Ovary (tissue), 10 donors: ENCODE measurements at regions of chr21 and their contacts with region 1.

Region 1: GRCh38 chr21:36966066-36966820 is at the start of gene HLCS:
- DNase-seq: peak; percentile 58 to 72 (median 68)
- H3K4me3 ChIP-seq: peak within 1 kb of the TSS; percentile 71
- H3K27ac ChIP-seq: peak within 1 kb of the TSS; percentile 76 to 85
- H3K4me1 ChIP-seq: peaks cover 5% of the 10 kb centered on the region
- H3K27me3 ChIP-seq: no peaks in the 10 kb centered on the region
- CTCF ChIP-seq: peak in 1 of 3 donors; percentile 22
- EP300 ChIP-seq: no peak
- POLR2A ChIP-seq: no peak
- total RNA-seq, gene HLCS: 8.8 to 20.3 (median 12.6) TPM

Region 2: DNA sequence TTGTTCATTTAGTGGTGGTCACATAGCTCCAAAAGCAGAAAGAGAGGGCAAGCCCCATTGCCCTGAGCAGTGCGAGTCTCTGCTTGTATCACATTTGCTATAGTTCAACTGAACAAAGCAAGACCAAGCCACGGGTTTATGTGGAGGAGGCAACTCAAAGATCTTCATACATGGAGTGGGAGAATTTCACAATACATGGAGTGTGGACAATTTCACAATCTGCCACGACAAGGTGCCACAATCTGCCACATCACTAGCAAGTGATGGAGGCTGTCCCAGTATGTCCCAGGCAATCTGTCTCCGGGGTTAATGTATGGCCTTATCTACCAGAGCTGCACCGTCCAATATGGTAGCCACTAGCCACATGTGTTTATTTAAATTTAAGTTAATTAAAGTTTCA is 355.8 kb after region 1 on chr21:
- intact Hi-C with region 1: loop called in 1 of 4 experiments (anchors 10 kb)
- DNase-seq: no peak
- H3K4me3 ChIP-seq: no peak overlapping the region
- H3K27ac ChIP-seq: no peak overlapping the region
- H3K4me1 ChIP-seq: no peaks in the 10 kb centered on the region
- H3K27me3 ChIP-seq: no peaks in the 10 kb centered on the region
- CTCF ChIP-seq: no peak
- EP300 ChIP-seq: no peak
- POLR2A ChIP-seq: no peak